ENCODE measurements at regions of chr18 and their contacts with region 1.

Region 1: DNA sequence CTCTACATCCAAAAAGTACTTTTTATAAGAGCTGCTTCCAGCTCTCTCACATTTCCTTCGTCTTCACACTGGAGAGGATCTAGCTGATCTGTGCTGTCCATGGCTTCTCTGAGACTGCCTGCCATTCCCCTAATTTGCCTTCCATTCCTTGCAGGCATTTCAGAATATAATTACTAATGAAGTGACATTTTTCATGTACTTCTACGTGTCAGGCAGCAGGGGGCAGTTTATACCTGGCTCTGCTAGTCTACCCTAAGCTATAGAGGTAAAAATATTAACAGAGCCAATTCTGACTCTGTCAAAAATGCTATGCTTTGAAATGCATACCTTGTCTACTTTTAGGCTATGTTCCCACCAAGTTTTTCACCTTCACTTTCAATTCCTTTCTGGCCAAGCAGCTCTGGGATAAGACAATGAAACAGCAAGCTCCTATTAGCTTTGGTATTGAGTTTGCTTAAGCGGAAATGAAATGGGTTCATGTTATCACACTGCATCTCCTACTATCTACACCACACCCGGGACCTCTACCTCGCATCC is 81.9 kb downstream of the MEP1B start:
- DNase-seq: no peak
- H3K4me3 ChIP-seq: no peak overlapping the region
- H3K27ac ChIP-seq: no peak overlapping the region
- H3K4me1 ChIP-seq: no peaks in the 10 kb centered on the region
- H3K27me3 ChIP-seq: no peaks in the 10 kb centered on the region
- CTCF ChIP-seq: peak; percentile 63 to 79 (median 71)
- POLR2A ChIP-seq: no peak

Region 2: GRCh38 chr18:32383050-32383819 is 111.5 kb after region 1 on chr18:
- intact Hi-C with region 1: no loop called
- DNase-seq: no peak
- H3K4me3 ChIP-seq: no peak overlapping the region
- H3K27ac ChIP-seq: peak overlapping the region in 1 of 2 donors; percentile 33
- H3K4me1 ChIP-seq: no peaks in the 10 kb centered on the region
- H3K27me3 ChIP-seq: no peaks in the 10 kb centered on the region
- CTCF ChIP-seq: no peak
- POLR2A ChIP-seq: no peak

Region 3: GRCh38 chr18:32470713-32471633 is 199.2 kb after region 1 on chr18 and contains the start of gene GAREM1:
- intact Hi-C with region 1: loop called (anchors 5 kb)
- DNase-seq: peak; percentile 95 to 97
- H3K4me3 ChIP-seq: peak within 1 kb of the TSS; percentile 54 to 83
- H3K27ac ChIP-seq: peak within 1 kb of the TSS; percentile 93
- H3K4me1 ChIP-seq: peaks cover 0 to 4% of the 10 kb centered on the region in 2 donors
- H3K27me3 ChIP-seq: no peaks in the 10 kb centered on the region
- CTCF ChIP-seq: peak; percentile 58 to 93 (median 89)
- POLR2A ChIP-seq: peak; percentile 87 to 97
- total RNA-seq, gene GAREM1: 1.5 to 12.0 (median 5.9) TPM